B cell (primary cell): ENCODE measurements at regions of chr5 and their contacts with region 1.

Region 1: DNA sequence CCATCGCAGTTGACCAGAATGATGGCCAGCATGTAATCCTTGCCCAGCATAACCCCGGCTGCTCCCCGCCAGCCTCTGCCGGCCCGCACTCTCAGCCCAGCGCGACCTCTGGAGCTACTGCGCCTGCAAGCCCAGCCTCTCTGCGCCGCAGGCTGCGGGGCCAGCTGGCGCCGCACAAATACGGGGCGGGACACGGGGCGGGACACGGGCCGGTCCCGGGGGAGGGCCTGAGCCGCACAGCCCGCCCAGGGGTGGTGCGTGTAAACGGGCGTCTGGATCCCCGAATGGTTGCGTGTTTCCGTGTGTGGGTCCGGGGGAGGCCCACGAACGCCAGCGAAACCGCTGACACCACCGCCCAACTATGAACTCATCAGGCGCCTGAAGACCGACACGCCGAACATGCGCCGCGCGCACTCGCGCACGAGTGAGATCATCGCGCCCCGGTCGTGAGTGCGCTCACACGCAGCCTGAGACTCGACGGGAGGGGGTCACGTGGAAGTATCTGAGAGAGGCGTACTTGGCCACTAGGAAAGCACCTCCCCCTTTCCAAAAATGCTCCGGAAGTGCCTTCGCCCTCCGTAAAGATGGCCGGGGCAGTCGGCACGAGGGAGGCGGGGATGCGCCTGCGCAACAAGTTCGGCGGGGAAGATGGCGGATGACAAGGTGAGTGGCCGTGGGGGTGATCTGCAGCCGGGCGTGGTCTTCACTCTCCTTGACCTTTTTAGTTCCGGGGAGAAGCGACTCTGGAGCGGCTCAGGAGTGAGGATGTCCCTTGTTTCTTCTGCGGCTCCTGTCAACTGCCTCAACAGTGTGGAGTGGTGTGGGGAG is at the starts of genes APBB3 and SLC35A4:
- DNase-seq: peak; percentile 99
- ATAC-seq: peak; percentile 89
- H3K4me3 ChIP-seq: peak within 1 kb of the TSS; percentile 71 to 95 (median 91)
- H3K4me3 Mint-ChIP-seq: peak within 1 kb of the TSS; percentile 90
- H3K27ac ChIP-seq: peak within 1 kb of the TSS; percentile 91 to 92
- H3K27ac Mint-ChIP-seq: peak within 1 kb of the TSS; percentile 97
- H3K4me1 ChIP-seq: peaks cover 25 to 36% of the 10 kb centered on the region in 2 donors
- H3K4me1 Mint-ChIP-seq: peaks cover 48% of the 10 kb centered on the region
- H3K27me3 ChIP-seq: no peaks in the 10 kb centered on the region
- H3K27me3 Mint-ChIP-seq: no peaks in the 10 kb centered on the region
- CTCF ChIP-seq: no peak
- total RNA-seq, gene APBB3: 73.9 and 79.7 TPM in 2 replicates
- total RNA-seq, gene SLC35A4: 44.0 and 48.6 TPM in 2 replicates

Region 2: GRCh38 chr5:140302786-140303639 is 261.4 kb before region 1 on chr5 and contains the start of gene PFDN1:
- CTCF ChIA-PET with region 1: no interaction called
- POLR2A ChIA-PET with region 1: no interaction called
- intact Hi-C with region 1: loop called (anchors 10 kb)
- DNase-seq: peak; percentile 94
- ATAC-seq: peak; percentile 98
- H3K4me3 ChIP-seq: peak within 1 kb of the TSS; percentile 85 to 96 (median 91)
- H3K4me3 Mint-ChIP-seq: peak within 1 kb of the TSS; percentile 97
- H3K27ac ChIP-seq: peak within 1 kb of the TSS; percentile 74 to 82
- H3K27ac Mint-ChIP-seq: peak within 1 kb of the TSS; percentile 95
- H3K4me1 ChIP-seq: peaks cover 12% of the 10 kb centered on the region in 2 donors
- H3K4me1 Mint-ChIP-seq: peaks cover 13% of the 10 kb centered on the region
- H3K27me3 ChIP-seq: no peaks in the 10 kb centered on the region
- H3K27me3 Mint-ChIP-seq: peaks cover 9% of the 10 kb centered on the region
- CTCF ChIP-seq: no peak
- total RNA-seq, gene PFDN1: 29.8 and 30.3 TPM in 2 replicates

Region 3: GRCh38 chr5:140372971-140373487 is 191.4 kb before region 1 on chr5:
- CTCF ChIA-PET with region 1: no interaction called
- POLR2A ChIA-PET with region 1: no interaction called
- intact Hi-C with region 1: no loop called
- DNase-seq: peak; percentile 63
- ATAC-seq: peak; percentile 71
- H3K4me3 ChIP-seq: no peak overlapping the region
- H3K4me3 Mint-ChIP-seq: no peak overlapping the region
- H3K27ac ChIP-seq: no peak overlapping the region
- H3K27ac Mint-ChIP-seq: no peak overlapping the region
- H3K4me1 ChIP-seq: no peaks in the 10 kb centered on the region
- H3K4me1 Mint-ChIP-seq: peaks cover 3% of the 10 kb centered on the region
- H3K27me3 ChIP-seq: no peaks in the 10 kb centered on the region
- H3K27me3 Mint-ChIP-seq: no peaks in the 10 kb centered on the region
- CTCF ChIP-seq: peak; percentile 85

Region 4: GRCh38 chr5:140420226-140420570 is 144.2 kb before region 1 on chr5:
- CTCF ChIA-PET with region 1: no interaction called
- POLR2A ChIA-PET with region 1: no interaction called
- intact Hi-C with region 1: no loop called
- DNase-seq: no peak
- ATAC-seq: no peak
- H3K4me3 ChIP-seq: no peak overlapping the region
- H3K4me3 Mint-ChIP-seq: no peak overlapping the region
- H3K27ac ChIP-seq: no peak overlapping the region
- H3K27ac Mint-ChIP-seq: peak overlapping the region; percentile 56
- H3K4me1 ChIP-seq: no peaks in the 10 kb centered on the region
- H3K4me1 Mint-ChIP-seq: peaks cover 41% of the 10 kb centered on the region
- H3K27me3 ChIP-seq: no peaks in the 10 kb centered on the region
- H3K27me3 Mint-ChIP-seq: no peaks in the 10 kb centered on the region
- CTCF ChIP-seq: no peak

Region 5: GRCh38 chr5:140524003-140524402 is 40.4 kb before region 1 on chr5:
- CTCF ChIA-PET with region 1: no interaction called
- POLR2A ChIA-PET with region 1: no interaction called
- intact Hi-C with region 1: no loop called
- DNase-seq: no peak
- ATAC-seq: no peak
- H3K4me3 ChIP-seq: no peak overlapping the region
- H3K4me3 Mint-ChIP-seq: no peak overlapping the region
- H3K27ac ChIP-seq: peak overlapping the region in 1 of 2 donors; percentile 41
- H3K27ac Mint-ChIP-seq: peak overlapping the region; percentile 35
- H3K4me1 ChIP-seq: peaks cover 0 to 5% of the 10 kb centered on the region in 2 donors
- H3K4me1 Mint-ChIP-seq: peaks cover 11% of the 10 kb centered on the region
- H3K27me3 ChIP-seq: no peaks in the 10 kb centered on the region
- H3K27me3 Mint-ChIP-seq: no peaks in the 10 kb centered on the region
- CTCF ChIP-seq: no peak

Region 6: GRCh38 chr5:140647042-140647341 is 82.6 kb after region 1 on chr5:
- CTCF ChIA-PET with region 1: no interaction called
- POLR2A ChIA-PET with region 1: interaction called, 3 read pairs
- intact Hi-C with region 1: loop called (anchors 1 kb)
- DNase-seq: no peak
- ATAC-seq: no peak
- H3K4me3 ChIP-seq: peak overlapping the region; percentile 81 to 94 (median 89)
- H3K4me3 Mint-ChIP-seq: peak overlapping the region; percentile 99
- H3K27ac ChIP-seq: peak overlapping the region; percentile 88 to 93
- H3K27ac Mint-ChIP-seq: peak overlapping the region; percentile 98
- H3K4me1 ChIP-seq: peaks cover 15 to 20% of the 10 kb centered on the region in 2 donors
- H3K4me1 Mint-ChIP-seq: peaks cover 36% of the 10 kb centered on the region
- H3K27me3 ChIP-seq: no peaks in the 10 kb centered on the region
- H3K27me3 Mint-ChIP-seq: no peaks in the 10 kb centered on the region
- CTCF ChIP-seq: no peak

Region 7: DNA sequence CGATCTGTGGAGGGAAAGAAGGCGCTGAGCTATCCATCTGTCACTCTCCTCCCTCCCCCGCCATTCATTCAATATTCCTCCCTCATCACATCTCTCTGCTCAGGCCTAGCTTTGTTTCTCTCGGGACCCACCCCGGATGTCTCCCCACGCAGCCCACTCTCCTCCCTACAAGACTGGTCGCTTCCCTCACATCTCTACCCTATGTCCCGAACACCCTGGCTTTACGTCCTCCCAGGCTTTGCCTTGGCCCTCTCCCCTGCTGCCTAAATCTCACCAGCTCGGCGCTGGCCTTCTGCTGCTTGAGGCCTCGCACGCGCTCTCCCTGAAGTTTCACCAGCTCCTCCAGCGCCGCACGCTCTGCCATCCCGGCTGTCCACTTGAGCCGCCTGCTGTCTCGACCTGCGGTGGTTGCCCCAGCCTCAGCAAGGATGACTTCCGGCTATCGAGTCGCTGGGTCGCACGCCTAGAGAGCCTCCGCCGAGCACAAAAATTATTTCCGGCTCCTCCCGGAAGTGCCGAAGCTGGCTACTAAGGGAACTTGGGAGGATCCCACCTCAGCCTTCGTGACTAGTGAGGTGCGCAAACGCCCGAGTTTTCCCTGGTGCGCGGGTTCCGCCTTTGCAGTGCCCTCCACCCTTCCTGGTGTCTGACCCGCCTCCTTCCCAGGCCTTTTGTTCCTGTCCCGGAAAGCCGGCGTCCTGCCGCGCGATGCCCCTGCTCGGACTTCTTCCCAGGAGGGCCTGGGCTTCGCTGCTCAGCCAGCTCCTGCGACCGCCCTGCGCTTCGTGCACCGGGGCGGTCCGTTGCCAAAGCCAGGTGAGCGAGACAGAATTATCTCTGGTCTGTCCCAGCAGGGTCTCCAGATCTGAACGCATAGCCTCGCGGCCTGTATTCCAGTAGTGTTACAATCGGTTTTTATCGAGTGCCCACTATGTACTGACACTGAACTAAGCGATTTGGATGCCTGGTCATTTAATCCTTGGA is 126.8 kb after region 1 on chr5 and contains the starts of genes HARS1 and HARS2:
- CTCF ChIA-PET with region 1: no interaction called
- POLR2A ChIA-PET with region 1: no interaction called
- intact Hi-C with region 1: loop called (anchors 1 kb)
- DNase-seq: peak; percentile 87
- ATAC-seq: peak; percentile 97
- H3K4me3 ChIP-seq: peak within 1 kb of the TSS; percentile 89 to 98 (median 97)
- H3K4me3 Mint-ChIP-seq: peak within 1 kb of the TSS; percentile 99
- H3K27ac ChIP-seq: peak within 1 kb of the TSS; percentile 68 to 81
- H3K27ac Mint-ChIP-seq: peak within 1 kb of the TSS; percentile 94
- H3K4me1 ChIP-seq: peaks cover 14% of the 10 kb centered on the region in 2 donors
- H3K4me1 Mint-ChIP-seq: peaks cover 30% of the 10 kb centered on the region
- H3K27me3 ChIP-seq: no peaks in the 10 kb centered on the region
- H3K27me3 Mint-ChIP-seq: no peaks in the 10 kb centered on the region
- CTCF ChIP-seq: no peak
- total RNA-seq, gene HARS1: 60.5 and 65.6 TPM in 2 replicates
- total RNA-seq, gene HARS2: 65.1 and 68.0 TPM in 2 replicates

Region 8: DNA sequence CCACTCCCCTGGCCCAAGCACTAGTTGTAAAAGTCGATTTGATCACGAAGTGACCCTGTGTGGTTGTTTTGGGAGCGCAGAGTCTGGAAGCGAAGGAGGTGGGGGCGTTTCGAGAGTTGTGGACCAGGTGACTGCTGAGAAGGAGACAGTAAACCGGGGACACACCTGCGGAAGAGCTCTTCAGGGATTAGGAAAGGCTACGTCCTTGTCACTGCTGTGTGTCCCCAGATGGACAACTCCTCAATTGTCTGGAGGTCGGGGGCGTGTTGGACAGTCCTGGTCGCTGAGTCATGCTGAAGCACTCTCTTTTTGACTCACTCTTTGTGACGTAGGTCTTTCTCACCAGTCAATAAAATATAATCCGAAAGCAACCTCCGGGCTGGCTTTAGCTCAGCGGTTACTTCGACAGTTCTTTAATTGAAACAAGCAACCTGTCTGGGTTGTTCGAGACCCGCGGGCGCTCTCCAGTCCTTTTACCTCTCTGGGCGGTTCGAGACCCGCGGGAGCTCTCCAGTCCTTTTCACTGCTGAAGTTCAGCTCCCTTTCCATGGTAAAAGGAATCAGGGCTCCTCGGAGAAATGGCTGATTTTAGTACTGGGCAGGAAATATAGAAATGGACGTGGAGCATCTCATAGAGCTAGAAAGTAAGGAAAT is 146.6 kb after region 1 on chr5:
- CTCF ChIA-PET with region 1: no interaction called
- POLR2A ChIA-PET with region 1: no interaction called
- intact Hi-C with region 1: loop called (anchors 2 kb)
- DNase-seq: peak; percentile 96
- ATAC-seq: peak; percentile 85
- H3K4me3 ChIP-seq: peak overlapping the region; percentile 69 to 98 (median 73)
- H3K4me3 Mint-ChIP-seq: peak overlapping the region; percentile 95
- H3K27ac ChIP-seq: peak overlapping the region; percentile 64 to 78
- H3K27ac Mint-ChIP-seq: peak overlapping the region; percentile 96
- H3K4me1 ChIP-seq: peaks cover 5 to 11% of the 10 kb centered on the region in 2 donors
- H3K4me1 Mint-ChIP-seq: peaks cover 14% of the 10 kb centered on the region
- H3K27me3 ChIP-seq: no peaks in the 10 kb centered on the region
- H3K27me3 Mint-ChIP-seq: no peaks in the 10 kb centered on the region
- CTCF ChIP-seq: no peak

Region 9: GRCh38 chr5:141618804-141619554 is 1054.6 kb after region 1 on chr5 and contains the start of gene DIAPH1:
- CTCF ChIA-PET with region 1: no interaction called
- POLR2A ChIA-PET with region 1: no interaction called
- intact Hi-C with region 1: no loop called
- DNase-seq: peak; percentile 99
- ATAC-seq: peak; percentile 89
- H3K4me3 ChIP-seq: peak within 1 kb of the TSS; percentile 84 to 98 (median 94)
- H3K4me3 Mint-ChIP-seq: peak within 1 kb of the TSS; percentile 93
- H3K27ac ChIP-seq: peak within 1 kb of the TSS; percentile 86 to 92
- H3K27ac Mint-ChIP-seq: peak within 1 kb of the TSS; percentile 91
- H3K4me1 ChIP-seq: peaks cover 52 to 55% of the 10 kb centered on the region in 2 donors
- H3K4me1 Mint-ChIP-seq: peaks cover 59% of the 10 kb centered on the region
- H3K27me3 ChIP-seq: no peaks in the 10 kb centered on the region
- H3K27me3 Mint-ChIP-seq: no peaks in the 10 kb centered on the region
- CTCF ChIP-seq: peak; percentile 94
- total RNA-seq, gene DIAPH1: 111 and 113 TPM in 2 replicates